ENCODE measurements at regions of chr9 and their contacts with region 1.

Region 1: GRCh38 chr9:36400332-36401163 is 479 bp upstream of the RNF38 start:
- H3K4me3 Mint-ChIP-seq: peak overlapping the region; percentile 85
- H3K27ac Mint-ChIP-seq: peak overlapping the region; percentile 90
- H3K4me1 Mint-ChIP-seq: peaks cover 48% of the 10 kb centered on the region
- H3K27me3 Mint-ChIP-seq: no peaks in the 10 kb centered on the region

Region 2: DNA sequence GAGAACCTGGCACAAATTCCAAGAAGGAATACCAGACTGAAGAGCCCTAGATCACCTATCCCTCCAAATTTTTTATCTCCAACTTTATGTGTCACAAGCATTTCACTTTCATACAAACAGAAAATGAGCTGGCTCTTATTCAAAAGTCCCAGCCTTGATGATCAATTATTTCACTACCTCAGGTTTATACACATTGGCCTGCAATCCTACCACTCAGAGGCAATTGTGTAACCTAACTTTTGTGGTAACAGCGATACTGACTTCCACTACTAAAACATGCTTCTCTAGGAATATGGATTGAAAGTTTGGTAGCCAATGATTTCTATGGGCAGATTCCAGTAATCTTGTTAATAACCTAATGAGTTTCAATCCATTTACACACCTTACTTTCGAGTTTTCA is 11.0 kb before region 1 on chr9:
- intact Hi-C with region 1: no loop called
- H3K4me3 Mint-ChIP-seq: no peak overlapping the region
- H3K27ac Mint-ChIP-seq: no peak overlapping the region
- H3K4me1 Mint-ChIP-seq: peaks cover 45% of the 10 kb centered on the region
- H3K27me3 Mint-ChIP-seq: no peaks in the 10 kb centered on the region

Region 3: DNA sequence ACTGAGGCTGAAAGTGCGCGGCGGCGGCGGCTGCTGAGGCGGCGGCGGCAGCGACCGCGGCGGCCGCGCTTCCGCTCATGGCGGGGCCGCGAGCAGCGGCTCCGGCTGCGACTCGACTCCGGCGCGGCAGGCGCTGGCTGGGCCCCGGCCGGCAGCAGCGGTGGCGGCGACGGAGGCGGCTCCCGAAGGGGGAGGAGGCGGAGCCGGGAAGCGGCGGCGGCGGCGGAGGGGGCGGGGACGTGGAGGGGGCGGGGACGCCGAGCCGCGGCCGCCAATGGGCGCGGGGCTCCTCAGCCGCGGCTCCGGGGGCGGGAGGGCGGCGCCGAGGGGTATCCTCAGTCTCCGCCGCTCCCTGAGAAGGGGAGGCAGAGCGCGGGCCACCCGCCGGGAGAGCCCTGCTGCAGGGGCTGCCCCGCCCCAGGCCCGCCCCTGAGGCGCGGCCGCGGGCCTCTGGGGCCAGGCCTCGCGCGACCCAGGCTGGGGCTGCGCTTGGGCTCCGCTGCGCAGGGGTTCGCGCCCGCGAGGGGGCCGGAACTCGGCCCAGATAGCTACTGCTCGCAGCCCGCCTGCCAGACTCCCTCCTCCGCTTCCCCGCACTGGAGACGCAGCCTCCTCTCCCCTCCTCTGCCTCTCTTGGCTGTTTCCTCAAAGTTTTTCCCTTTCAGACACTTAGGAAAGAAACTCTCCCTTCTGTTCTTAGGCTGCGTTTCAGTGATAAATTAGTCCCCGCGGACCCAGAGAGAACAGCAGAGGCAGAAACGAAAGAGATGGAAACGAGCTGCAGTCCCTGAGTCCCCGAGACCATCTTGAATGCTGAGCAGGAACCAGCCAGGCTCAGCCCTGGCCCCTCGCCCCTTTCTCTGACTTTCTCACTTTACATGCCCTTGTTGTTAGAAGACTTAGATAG is 87.2 kb after region 1 on chr9:
- intact Hi-C with region 1: loop called (anchors 2 kb)
- H3K4me3 Mint-ChIP-seq: peak overlapping the region; percentile 84
- H3K27ac Mint-ChIP-seq: peak overlapping the region; percentile 97
- H3K4me1 Mint-ChIP-seq: peaks cover 47% of the 10 kb centered on the region
- H3K27me3 Mint-ChIP-seq: peaks cover 6% of the 10 kb centered on the region

Region 4: DNA sequence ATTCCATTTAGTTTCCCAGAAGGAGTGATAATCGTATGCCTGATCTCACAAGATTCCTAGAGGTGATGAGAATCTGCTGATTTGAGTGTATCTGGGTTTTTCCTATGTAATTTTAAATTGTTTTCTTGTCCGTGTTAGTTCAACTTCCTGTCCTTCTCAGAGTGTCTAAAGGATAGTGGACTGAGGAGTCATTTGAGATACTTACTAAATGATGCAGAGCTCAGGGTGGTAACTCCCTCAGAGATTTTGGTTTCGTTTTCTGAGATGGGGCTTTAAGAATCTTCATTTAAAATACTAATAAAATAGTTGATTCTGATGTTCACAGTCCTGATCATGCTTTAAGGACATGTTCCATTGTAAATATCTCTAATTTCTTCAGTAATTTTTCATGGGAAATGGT is 202.5 kb after region 1 on chr9:
- intact Hi-C with region 1: no loop called
- H3K4me3 Mint-ChIP-seq: no peak overlapping the region
- H3K27ac Mint-ChIP-seq: peak overlapping the region; percentile 41
- H3K4me1 Mint-ChIP-seq: no peaks in the 10 kb centered on the region
- H3K27me3 Mint-ChIP-seq: no peaks in the 10 kb centered on the region